ENCODE measurements at regions of chr14 and their contacts with region 1.

Region 1: DNA sequence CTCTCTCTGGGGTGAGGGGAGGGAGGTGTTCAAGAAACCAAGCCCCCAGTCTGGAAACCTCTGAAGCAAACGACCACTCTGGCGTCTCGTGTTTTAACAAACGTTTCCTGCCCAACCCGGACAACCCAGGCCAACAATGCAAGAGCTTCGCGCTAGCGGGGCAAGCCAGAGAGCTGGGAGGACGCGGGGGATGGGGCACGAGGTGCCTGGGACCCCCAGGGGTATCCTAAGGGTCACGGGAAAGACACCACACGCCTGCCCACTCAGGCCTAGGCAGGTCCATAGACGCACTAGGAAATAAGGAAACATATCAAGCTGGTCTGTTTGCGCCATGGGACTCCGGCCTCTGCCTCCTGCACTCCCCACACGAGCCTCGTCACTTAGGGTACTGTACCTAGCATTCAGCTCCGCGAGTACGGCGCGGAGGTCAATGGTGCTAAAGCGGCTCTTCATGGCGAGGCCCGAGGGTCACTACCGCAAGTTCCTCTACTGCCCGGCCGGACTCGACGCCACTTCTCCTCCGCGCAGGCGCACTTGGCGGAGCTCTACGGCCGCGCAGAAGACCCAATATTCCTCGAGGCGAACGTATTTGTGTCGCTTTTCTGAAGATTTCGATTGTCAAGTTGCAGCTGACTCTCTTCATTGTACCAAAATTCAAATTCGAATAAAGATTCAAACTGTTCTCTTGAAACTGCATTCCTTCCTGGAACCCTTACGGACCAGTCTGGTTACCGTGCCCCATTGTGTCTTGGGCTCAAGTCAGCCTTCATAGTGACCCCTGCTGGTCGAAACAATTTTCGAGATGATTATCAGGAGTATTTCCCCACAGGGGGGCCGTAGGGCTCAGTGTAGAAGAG is at the start of gene NEMF:
- DNase-seq: peak; percentile 96
- H3K4me3 Mint-ChIP-seq: peak within 1 kb of the TSS; percentile 93
- H3K27ac Mint-ChIP-seq: peak within 1 kb of the TSS; percentile 98
- H3K4me1 Mint-ChIP-seq: peaks cover 34% of the 10 kb centered on the region
- H3K27me3 Mint-ChIP-seq: no peaks in the 10 kb centered on the region
- total RNA-seq, gene NEMF: 65.8 and 75.4 TPM in 2 replicates

Region 2: GRCh38 chr14:49867831-49868723 is 15.5 kb after region 1 on chr14:
- intact Hi-C with region 1: no loop called
- DNase-seq: peak; percentile 98
- H3K4me3 Mint-ChIP-seq: peak overlapping the region; percentile 99
- H3K27ac Mint-ChIP-seq: peak overlapping the region; percentile 97
- H3K4me1 Mint-ChIP-seq: peaks cover 23% of the 10 kb centered on the region
- H3K27me3 Mint-ChIP-seq: no peaks in the 10 kb centered on the region

Region 3: DNA sequence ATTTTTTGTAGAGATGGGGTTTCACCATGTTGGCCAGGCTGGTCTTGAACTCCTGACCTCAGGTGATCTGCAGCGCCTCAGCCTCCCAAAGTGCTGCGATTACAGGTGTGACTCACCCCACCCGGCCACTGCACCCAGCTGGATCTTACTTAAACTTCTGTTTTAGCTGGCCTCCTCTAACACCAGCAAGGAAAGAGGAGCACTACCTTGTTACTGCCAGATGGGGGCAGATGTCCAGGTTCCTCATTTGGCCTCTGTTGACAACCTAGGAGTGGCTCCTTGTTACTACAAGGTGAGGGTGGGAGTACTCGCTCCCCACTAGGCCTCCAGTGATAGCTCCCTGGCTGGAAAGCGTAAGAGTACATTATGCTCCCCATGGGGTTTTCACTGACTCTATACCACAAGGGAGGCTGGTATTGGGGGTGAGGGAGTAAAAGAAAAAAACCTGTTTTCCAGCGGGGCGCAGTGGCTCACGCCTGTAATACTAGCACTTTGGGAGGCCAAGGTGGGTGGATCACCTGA is 27.2 kb after region 1 on chr14:
- intact Hi-C with region 1: no loop called
- DNase-seq: peak; percentile 87
- H3K4me3 Mint-ChIP-seq: no peak overlapping the region
- H3K27ac Mint-ChIP-seq: peak overlapping the region; percentile 66
- H3K4me1 Mint-ChIP-seq: peaks cover 25% of the 10 kb centered on the region
- H3K27me3 Mint-ChIP-seq: no peaks in the 10 kb centered on the region

Region 4: DNA sequence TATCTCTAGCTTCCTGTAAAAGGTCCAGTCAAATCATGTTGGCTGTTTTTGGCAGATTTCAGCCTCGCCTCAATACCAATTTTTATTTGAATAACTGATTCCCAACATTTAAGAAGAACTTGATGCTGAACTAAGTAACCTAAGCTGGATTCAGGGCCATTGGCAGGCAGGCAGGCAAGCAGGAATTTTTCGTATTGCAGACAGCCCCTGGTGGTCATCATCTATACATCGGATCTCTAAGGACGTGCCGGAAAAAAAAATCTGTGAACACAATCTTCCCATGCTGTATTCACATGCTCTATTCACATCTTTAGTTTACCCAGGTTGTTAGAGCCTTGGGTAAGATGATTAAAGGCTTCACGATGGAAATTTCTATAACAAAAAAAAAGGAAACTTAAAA is 256.8 kb after region 1 on chr14:
- intact Hi-C with region 1: loop called (anchors 1 kb)
- DNase-seq: no peak
- H3K4me3 Mint-ChIP-seq: no peak overlapping the region
- H3K27ac Mint-ChIP-seq: no peak overlapping the region
- H3K4me1 Mint-ChIP-seq: peaks cover 20% of the 10 kb centered on the region
- H3K27me3 Mint-ChIP-seq: no peaks in the 10 kb centered on the region